ENCODE measurements at regions of chr15 and their contacts with region 1.

Region 1: DNA sequence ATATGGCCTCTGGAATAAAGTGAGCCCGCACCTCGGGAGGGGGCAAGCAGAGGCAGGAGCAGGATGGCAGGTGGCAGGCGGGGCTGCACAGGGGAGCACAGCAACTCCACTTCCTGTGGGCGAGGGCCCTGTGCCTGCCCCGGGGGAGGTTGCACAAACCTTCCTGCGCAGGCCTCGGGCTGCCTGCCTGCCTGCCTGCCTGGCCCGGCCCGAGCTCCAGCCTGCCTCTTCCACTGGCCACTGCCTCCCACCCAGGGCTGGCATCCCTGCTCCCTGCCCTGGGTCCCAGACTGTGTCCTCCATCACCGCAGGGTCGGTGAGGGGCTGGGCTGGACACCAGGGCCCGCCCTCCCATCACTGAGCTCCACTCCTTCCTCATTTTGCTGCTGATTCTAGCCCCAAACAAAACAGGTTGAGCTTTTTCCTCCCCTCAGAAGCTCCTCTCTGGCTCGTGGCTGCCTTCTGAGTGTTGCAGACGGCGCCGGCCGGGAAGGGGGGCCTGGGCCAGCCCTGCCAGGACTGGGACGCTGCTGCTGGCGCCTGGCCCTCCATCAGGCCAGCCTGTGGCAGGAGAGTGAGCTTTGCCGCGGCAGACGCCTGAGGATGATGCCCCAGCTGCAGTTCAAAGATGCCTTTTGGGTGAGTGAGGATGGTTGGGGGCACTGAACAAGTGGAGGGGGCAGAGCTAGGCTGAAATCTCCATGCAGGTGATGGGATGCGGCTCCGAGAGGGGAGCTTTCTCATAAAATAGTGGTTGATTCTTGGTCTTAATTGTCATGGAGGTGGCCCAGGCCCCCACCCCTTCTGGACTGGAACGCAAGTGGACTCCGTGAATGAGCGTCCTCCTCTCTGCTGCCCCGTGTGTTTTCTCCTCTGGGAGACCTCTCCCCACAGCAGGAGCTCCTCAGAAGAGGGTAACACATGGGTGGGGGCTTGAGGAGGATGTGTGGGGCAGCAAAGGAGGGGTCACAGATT is at the start of gene PSTPIP1:
- DNase-seq: peak; percentile 56 to 84 (median 73)
- ATAC-seq: peak; percentile 76
- H3K4me3 ChIP-seq: peak within 1 kb of the TSS; percentile 95
- H3K4me3 Mint-ChIP-seq: peak within 1 kb of the TSS; percentile 95
- H3K27ac ChIP-seq: peak within 1 kb of the TSS; percentile 88
- H3K27ac Mint-ChIP-seq: peak within 1 kb of the TSS; percentile 98
- H3K4me1 ChIP-seq: peaks cover 77% of the 10 kb centered on the region
- H3K4me1 Mint-ChIP-seq: peaks cover 75% of the 10 kb centered on the region
- H3K27me3 ChIP-seq: no peaks in the 10 kb centered on the region
- H3K27me3 Mint-ChIP-seq: no peaks in the 10 kb centered on the region
- CTCF ChIP-seq: no peak
- total RNA-seq, gene PSTPIP1: 79.4 to 82.7 TPM

Region 2: DNA sequence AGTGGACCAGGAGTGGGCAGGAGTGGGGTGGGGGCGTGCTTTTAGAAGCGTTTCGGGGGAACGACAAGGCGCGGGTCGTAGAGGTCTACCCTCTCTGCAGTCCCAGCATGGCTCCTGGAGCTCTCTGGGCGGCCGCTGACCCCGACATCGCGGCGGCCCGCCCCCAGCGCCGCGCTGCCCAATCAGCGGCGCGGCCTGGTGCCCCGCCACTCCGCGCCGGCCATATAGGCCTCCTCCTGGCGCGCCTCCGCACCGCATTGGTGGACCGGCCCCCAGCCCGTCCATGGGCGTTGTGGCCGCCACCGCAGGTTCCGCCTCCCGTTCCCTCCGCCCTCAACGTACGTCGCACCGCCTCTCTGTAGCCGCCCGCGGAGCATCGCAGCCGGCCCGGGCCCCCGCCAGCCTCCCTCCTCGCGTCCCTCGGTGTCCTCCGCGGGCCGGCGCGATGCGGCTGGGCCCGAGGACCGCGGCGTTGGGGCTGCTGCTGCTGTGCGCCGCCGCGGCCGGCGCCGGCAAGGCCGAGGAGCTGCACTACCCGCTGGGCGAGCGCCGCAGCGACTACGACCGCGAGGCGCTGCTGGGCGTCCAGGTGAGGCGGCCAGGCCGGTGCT is 63.8 kb before region 1 on chr15 and contains the start of gene RCN2:
- CTCF ChIA-PET with region 1: no interaction called
- POLR2A ChIA-PET with region 1: interaction called, 34 read pairs
- intact Hi-C with region 1: loop called (anchors 5 kb)
- DNase-seq: peak; percentile 84 to 96 (median 91)
- ATAC-seq: peak; percentile 98
- H3K4me3 ChIP-seq: peak within 1 kb of the TSS; percentile 59
- H3K4me3 Mint-ChIP-seq: peak within 1 kb of the TSS; percentile 98
- H3K27ac ChIP-seq: peak within 1 kb of the TSS in 1 of 2 donors; percentile 53
- H3K27ac Mint-ChIP-seq: peak within 1 kb of the TSS; percentile 91
- H3K4me1 ChIP-seq: peaks cover 6% of the 10 kb centered on the region
- H3K4me1 Mint-ChIP-seq: peaks cover 41% of the 10 kb centered on the region
- H3K27me3 ChIP-seq: no peaks in the 10 kb centered on the region
- H3K27me3 Mint-ChIP-seq: peaks cover 1% of the 10 kb centered on the region
- CTCF ChIP-seq: no peak
- total RNA-seq, gene RCN2: 18.1 to 19.1 TPM

Region 3: DNA sequence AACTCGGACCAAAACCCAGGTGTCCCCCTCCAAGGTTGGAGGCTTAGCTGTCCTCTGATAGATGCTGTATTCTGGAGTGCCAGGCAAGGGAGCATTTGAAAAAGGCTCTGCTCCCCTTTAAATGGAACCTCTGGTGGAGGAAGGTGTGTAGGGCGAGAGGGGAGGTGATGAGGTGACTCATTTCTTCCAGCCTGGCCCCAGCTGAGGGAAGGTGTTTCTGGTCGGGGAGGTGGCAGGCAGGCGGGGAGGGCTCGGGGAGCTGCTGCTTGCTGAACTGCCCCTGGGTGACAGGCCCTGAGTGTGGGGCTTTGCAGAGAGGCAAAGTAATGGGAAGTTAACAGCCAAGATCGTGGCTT is 18.5 kb after region 1 on chr15:
- CTCF ChIA-PET with region 1: interaction called, 5 read pairs
- POLR2A ChIA-PET with region 1: interaction called, 124 read pairs
- intact Hi-C with region 1: loop called (anchors 2 kb)
- DNase-seq: peak; percentile 52 to 92 (median 82)
- ATAC-seq: peak; percentile 85
- H3K4me3 ChIP-seq: peak overlapping the region; percentile 21
- H3K4me3 Mint-ChIP-seq: peak overlapping the region; percentile 88
- H3K27ac ChIP-seq: peak overlapping the region; percentile 50 to 76
- H3K27ac Mint-ChIP-seq: peak overlapping the region; percentile 98
- H3K4me1 ChIP-seq: peaks cover 99% of the 10 kb centered on the region
- H3K4me1 Mint-ChIP-seq: peaks cover 85% of the 10 kb centered on the region
- H3K27me3 ChIP-seq: no peaks in the 10 kb centered on the region
- H3K27me3 Mint-ChIP-seq: no peaks in the 10 kb centered on the region
- CTCF ChIP-seq: no peak

Region 4: GRCh38 chr15:77031376-77032050 is 36.3 kb after region 1 on chr15:
- CTCF ChIA-PET with region 1: interaction called, 3 read pairs
- POLR2A ChIA-PET with region 1: interaction called, 14 read pairs
- intact Hi-C with region 1: no loop called
- DNase-seq: peak in 5 of 14 experiments; percentile 26 to 50 (median 43)
- ATAC-seq: peak; percentile 54
- H3K4me3 ChIP-seq: no peak overlapping the region
- H3K4me3 Mint-ChIP-seq: no peak overlapping the region
- H3K27ac ChIP-seq: no peak overlapping the region
- H3K27ac Mint-ChIP-seq: peak overlapping the region; percentile 39
- H3K4me1 ChIP-seq: peaks cover 14% of the 10 kb centered on the region
- H3K4me1 Mint-ChIP-seq: no peaks in the 10 kb centered on the region
- H3K27me3 ChIP-seq: no peaks in the 10 kb centered on the region
- H3K27me3 Mint-ChIP-seq: no peaks in the 10 kb centered on the region
- CTCF ChIP-seq: no peak

Region 5: GRCh38 chr15:78087951-78088772 is 1092.9 kb after region 1 on chr15:
- CTCF ChIA-PET with region 1: no interaction called
- POLR2A ChIA-PET with region 1: no interaction called
- intact Hi-C with region 1: no loop called
- DNase-seq: peak in 2 of 14 experiments; percentile 48 to 53
- ATAC-seq: no peak
- H3K4me3 ChIP-seq: no peak overlapping the region
- H3K4me3 Mint-ChIP-seq: no peak overlapping the region
- H3K27ac ChIP-seq: no peak overlapping the region
- H3K27ac Mint-ChIP-seq: no peak overlapping the region
- H3K4me1 ChIP-seq: peaks cover 8% of the 10 kb centered on the region
- H3K4me1 Mint-ChIP-seq: no peaks in the 10 kb centered on the region
- H3K27me3 ChIP-seq: no peaks in the 10 kb centered on the region
- H3K27me3 Mint-ChIP-seq: no peaks in the 10 kb centered on the region
- CTCF ChIP-seq: no peak